ENCODE measurements at regions of chr14 and their contacts with region 1.

Region 1: GRCh38 chr14:97458661-97459579 is 661.7 kb downstream of the VRK1 start:
- DNase-seq: peak; percentile 95
- H3K4me3 ChIP-seq: peak overlapping the region; percentile 30
- H3K27ac ChIP-seq: peak overlapping the region; percentile 80
- H3K4me1 ChIP-seq: peaks cover 30% of the 10 kb centered on the region
- H3K27me3 ChIP-seq: no peaks in the 10 kb centered on the region
- CTCF ChIP-seq: no peak; the same call in 1 of the 2 replicates

Region 2: DNA sequence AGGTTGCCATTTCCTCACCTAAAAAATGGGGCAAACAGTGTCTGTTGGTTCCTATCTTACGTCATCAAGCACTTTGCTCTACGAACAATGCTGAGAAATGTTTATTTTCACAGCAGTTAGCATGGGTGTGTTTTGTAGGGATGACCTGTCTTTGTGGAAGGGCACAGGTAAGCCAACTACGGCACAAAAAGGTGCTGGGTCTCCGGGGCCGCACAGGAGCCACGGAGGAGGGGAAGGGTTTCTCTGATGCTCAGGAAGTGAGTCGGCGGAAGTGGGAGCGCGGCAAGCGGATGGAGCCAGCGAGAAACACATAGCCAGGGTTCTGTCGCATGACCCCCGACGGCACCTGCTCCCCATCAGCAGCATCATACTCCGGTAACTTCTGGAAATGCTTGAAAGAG is 1838.3 kb before region 1 on chr14:
- CTCF ChIA-PET with region 1: interaction called, 21 read pairs
- POLR2A ChIA-PET with region 1: no interaction called
- intact Hi-C with region 1: no loop called
- DNase-seq: no peak
- H3K4me3 ChIP-seq: no peak overlapping the region
- H3K27ac ChIP-seq: no peak overlapping the region
- H3K4me1 ChIP-seq: peaks cover 4% of the 10 kb centered on the region
- H3K27me3 ChIP-seq: no peaks in the 10 kb centered on the region
- CTCF ChIP-seq: no peak

Region 3: GRCh38 chr14:97523697-97524315 is 64.9 kb after region 1 on chr14:
- CTCF ChIA-PET with region 1: no interaction called
- POLR2A ChIA-PET with region 1: no interaction called
- intact Hi-C with region 1: no loop called
- DNase-seq: peak; percentile 78
- H3K4me3 ChIP-seq: no peak overlapping the region
- H3K27ac ChIP-seq: no peak overlapping the region
- H3K4me1 ChIP-seq: peaks cover 18% of the 10 kb centered on the region
- H3K27me3 ChIP-seq: no peaks in the 10 kb centered on the region
- CTCF ChIP-seq: no peak

Measured in A673 (cell line).